ENCODE measurements at regions of chr1 and their contacts with region 1.

Region 1: DNA sequence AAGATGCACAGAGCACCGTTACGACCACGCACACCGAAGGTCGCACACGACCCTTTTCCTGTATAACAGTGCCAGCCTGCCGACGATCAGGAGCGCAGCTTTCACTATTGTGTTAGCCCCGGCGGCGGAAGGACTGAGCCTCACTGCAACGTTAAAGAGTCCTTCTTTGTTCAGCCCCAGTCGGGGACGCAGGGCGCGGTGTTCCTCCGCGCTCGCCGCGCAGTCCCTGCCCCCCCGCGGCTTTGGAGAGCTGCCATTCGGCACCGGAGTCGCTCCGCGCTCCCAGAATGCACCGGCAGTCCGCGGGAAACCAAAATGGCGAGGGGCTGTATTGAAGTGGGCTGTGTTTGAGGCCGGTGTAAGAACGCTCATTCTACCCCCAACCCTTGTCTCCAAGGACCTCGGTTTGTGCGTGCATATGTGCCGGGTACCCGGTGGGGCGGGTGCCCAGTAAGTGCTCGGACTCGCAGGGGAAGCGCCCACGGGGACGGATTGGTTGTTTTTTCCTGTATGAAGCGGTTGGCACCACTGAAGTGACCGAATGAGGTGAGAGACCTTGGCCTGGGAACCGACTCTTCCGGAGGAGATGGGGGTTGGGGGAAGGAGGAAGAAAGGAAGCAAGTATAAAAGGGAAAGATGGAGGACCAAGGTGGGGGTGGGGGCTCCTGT is at the start of gene MTF2:
- DNase-seq: peak; percentile 84 to 92 (median 90)
- ATAC-seq: peak; percentile 96
- H3K4me3 ChIP-seq: peak within 1 kb of the TSS; percentile 88
- H3K4me3 Mint-ChIP-seq: peak within 1 kb of the TSS; percentile 94 to 99 (median 97)
- H3K27ac ChIP-seq: peak within 1 kb of the TSS; percentile 93
- H3K27ac Mint-ChIP-seq: peak within 1 kb of the TSS; percentile 88 to 99 (median 94)
- H3K4me1 ChIP-seq: peaks cover 10 to 22% of the 10 kb centered on the region in 2 donors
- H3K4me1 Mint-ChIP-seq: peaks cover 34 to 58% (median 50%) of the 10 kb centered on the region in 7 donors
- H3K27me3 ChIP-seq: no peaks in the 10 kb centered on the region
- H3K27me3 Mint-ChIP-seq: no peaks in the 10 kb centered on the region
- total RNA-seq, gene MTF2: 35.3 to 63.1 (median 47.1) TPM

Region 2: GRCh38 chr1:92858564-92859399 is 220.3 kb before region 1 on chr1:
- CTCF ChIA-PET with region 1: no interaction called
- POLR2A ChIA-PET with region 1: interaction called, 4 read pairs
- intact Hi-C with region 1: loop called (anchors 1 to 5 kb)
- DNase-seq: peak in 8 of 9 donors; percentile 32 to 86 (median 80)
- ATAC-seq: peak; percentile 100
- H3K4me3 ChIP-seq: peak overlapping the region; percentile 17
- H3K4me3 Mint-ChIP-seq: peak overlapping the region; percentile 5 to 80 (median 70)
- H3K27ac ChIP-seq: peak overlapping the region; percentile 43
- H3K27ac Mint-ChIP-seq: peak overlapping the region; percentile 29 to 83 (median 55)
- H3K4me1 ChIP-seq: peaks cover 0 to 3% of the 10 kb centered on the region in 2 donors
- H3K4me1 Mint-ChIP-seq: peaks cover 15 to 32% (median 22%) of the 10 kb centered on the region in 7 donors
- H3K27me3 ChIP-seq: no peaks in the 10 kb centered on the region
- H3K27me3 Mint-ChIP-seq: no peaks in the 10 kb centered on the region

Region 3: GRCh38 chr1:93042187-93043056 is 36.7 kb before region 1 on chr1:
- CTCF ChIA-PET with region 1: interaction called, 7 read pairs
- POLR2A ChIA-PET with region 1: interaction called, 22 read pairs
- intact Hi-C with region 1: loop called (anchors 1 kb)
- DNase-seq: peak in 8 of 9 donors; percentile 27 to 87 (median 79)
- ATAC-seq: peak; percentile 99
- H3K4me3 ChIP-seq: peak overlapping the region; percentile 38
- H3K4me3 Mint-ChIP-seq: peak overlapping the region; percentile 42 to 89 (median 82)
- H3K27ac ChIP-seq: peak overlapping the region; percentile 78
- H3K27ac Mint-ChIP-seq: peak overlapping the region; percentile 88 to 98 (median 94)
- H3K4me1 ChIP-seq: peaks cover 9 to 10% of the 10 kb centered on the region in 2 donors
- H3K4me1 Mint-ChIP-seq: peaks cover 7 to 38% (median 14%) of the 10 kb centered on the region in 7 donors
- H3K27me3 ChIP-seq: no peaks in the 10 kb centered on the region
- H3K27me3 Mint-ChIP-seq: no peaks in the 10 kb centered on the region

Region 4: GRCh38 chr1:93056214-93056613 is 22.9 kb before region 1 on chr1:
- CTCF ChIA-PET with region 1: no interaction called
- POLR2A ChIA-PET with region 1: no interaction called
- intact Hi-C with region 1: no loop called
- DNase-seq: peak in 3 of 9 donors; percentile 5 to 17 (median 14)
- ATAC-seq: no peak
- H3K4me3 ChIP-seq: no peak overlapping the region
- H3K4me3 Mint-ChIP-seq: no peak overlapping the region
- H3K27ac ChIP-seq: no peak overlapping the region
- H3K27ac Mint-ChIP-seq: no peak overlapping the region
- H3K4me1 ChIP-seq: no peaks in the 10 kb centered on the region
- H3K4me1 Mint-ChIP-seq: peaks cover 0 to 4% (median 0%) of the 10 kb centered on the region in 7 donors
- H3K27me3 ChIP-seq: peaks cover 0 to 5% of the 10 kb centered on the region in 2 donors
- H3K27me3 Mint-ChIP-seq: peaks cover 5 to 39% (median 8%) of the 10 kb centered on the region in 5 donors

Region 5: DNA sequence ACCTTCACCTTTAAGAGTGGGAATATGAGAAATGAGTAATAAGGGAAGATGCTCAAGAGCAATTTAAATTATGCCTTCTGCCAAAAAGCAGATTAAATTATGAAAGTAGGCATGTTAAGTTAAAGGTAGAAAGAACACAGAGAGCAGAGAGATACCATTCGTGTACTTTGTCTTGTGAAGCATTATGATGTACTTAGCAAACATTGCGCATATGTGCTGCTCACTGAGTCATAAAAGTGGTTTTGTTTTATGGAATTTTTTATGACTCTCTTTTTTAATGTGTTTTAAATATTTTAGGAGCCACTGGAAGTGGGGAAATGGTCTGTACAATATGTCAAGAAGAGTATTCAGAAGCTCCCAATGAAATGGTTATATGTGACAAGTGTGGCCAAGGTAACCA is 35.3 kb after region 1 on chr1:
- CTCF ChIA-PET with region 1: no interaction called
- POLR2A ChIA-PET with region 1: interaction called, 6 read pairs
- intact Hi-C with region 1: loop called in 1 of 2 experiments (anchors 5 kb)
- DNase-seq: no peak
- ATAC-seq: no peak
- H3K4me3 ChIP-seq: no peak overlapping the region
- H3K4me3 Mint-ChIP-seq: no peak overlapping the region
- H3K27ac ChIP-seq: no peak overlapping the region
- H3K27ac Mint-ChIP-seq: no peak overlapping the region
- H3K4me1 ChIP-seq: no peaks in the 10 kb centered on the region
- H3K4me1 Mint-ChIP-seq: peaks cover 15 to 36% (median 21%) of the 10 kb centered on the region in 7 donors
- H3K27me3 ChIP-seq: no peaks in the 10 kb centered on the region
- H3K27me3 Mint-ChIP-seq: no peaks in the 10 kb centered on the region

Region 6: DNA sequence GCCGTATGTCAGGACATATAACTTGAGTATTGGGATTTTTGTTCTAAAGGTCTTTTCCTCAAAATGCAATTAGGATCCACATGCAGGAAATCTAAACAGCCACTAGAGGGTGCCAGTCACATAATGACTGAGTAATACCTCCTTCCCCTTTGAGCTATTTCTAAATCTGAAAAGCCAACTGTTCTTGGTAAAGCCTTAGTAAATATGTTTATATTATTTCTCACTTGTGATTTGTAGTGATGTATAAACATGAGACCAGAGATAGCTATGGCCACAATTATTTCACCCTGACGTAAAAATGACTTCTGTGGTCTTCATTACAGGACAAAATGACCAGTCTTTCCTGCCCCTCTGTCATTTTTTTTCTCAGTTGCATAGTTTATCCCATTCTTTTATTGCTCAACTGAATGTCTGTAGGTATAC is 225.6 kb after region 1 on chr1:
- CTCF ChIA-PET with region 1: interaction called, 6 read pairs
- POLR2A ChIA-PET with region 1: interaction called, 3 read pairs
- intact Hi-C with region 1: loop called (anchors 1 to 2 kb)
- DNase-seq: peak in 8 of 9 donors; percentile 24 to 72 (median 54)
- ATAC-seq: peak; percentile 78
- H3K4me3 ChIP-seq: no peak overlapping the region
- H3K4me3 Mint-ChIP-seq: no peak overlapping the region
- H3K27ac ChIP-seq: no peak overlapping the region
- H3K27ac Mint-ChIP-seq: no peak overlapping the region
- H3K4me1 ChIP-seq: no peaks in the 10 kb centered on the region
- H3K4me1 Mint-ChIP-seq: peaks cover 0 to 4% (median 0%) of the 10 kb centered on the region in 7 donors
- H3K27me3 ChIP-seq: no peaks in the 10 kb centered on the region
- H3K27me3 Mint-ChIP-seq: no peaks in the 10 kb centered on the region

Region 7: DNA sequence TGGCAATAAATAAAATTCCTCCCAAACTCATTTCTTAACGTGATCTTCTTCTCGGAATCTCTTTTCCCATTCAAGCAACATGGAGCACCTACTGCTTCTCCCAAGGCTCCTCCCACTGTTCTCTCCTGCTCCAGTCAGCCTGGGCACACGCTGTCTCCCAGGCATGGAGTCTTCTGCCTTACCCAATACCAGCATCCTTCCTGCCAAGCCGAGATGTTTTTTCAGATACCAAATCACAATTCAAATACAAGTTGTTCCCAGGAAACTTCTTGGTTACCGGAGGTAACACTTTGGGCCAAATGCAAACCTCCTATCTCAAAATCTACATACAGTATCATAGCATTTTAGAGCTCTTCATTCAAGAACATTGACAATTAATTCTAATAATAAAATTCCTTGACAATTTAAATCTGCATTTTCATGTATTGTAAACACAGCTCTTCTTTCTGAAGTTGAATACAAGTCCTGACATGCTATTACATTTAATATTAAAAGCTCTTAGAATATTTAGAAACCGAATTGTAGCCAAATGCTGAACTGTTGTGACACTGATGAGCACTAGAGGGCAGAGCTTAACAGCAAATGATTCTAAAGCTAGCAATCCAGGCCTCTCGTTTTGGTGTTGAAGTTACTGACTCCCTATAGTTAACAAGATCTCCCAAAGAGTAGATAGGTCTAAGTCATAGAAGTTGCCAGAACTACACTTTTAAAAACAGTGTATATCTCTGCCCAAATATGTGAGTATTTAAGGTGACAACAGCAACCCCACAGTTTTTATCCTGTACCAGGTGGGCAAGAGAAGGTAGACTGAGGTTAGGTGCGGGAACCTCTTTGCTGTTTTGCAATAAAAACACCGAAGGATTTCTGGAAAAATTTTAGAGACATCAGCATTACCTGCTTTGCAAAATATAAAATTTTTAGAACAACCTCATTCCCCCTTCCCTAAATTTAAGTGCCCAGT is 550.3 kb after region 1 on chr1:
- CTCF ChIA-PET with region 1: interaction called, 4 read pairs
- POLR2A ChIA-PET with region 1: no interaction called
- intact Hi-C with region 1: loop called in 1 of 2 experiments (anchors 2 kb)
- DNase-seq: peak in 8 of 9 donors; percentile 22 to 69 (median 56)
- ATAC-seq: peak; percentile 89
- H3K4me3 ChIP-seq: no peak overlapping the region
- H3K4me3 Mint-ChIP-seq: no peak overlapping the region
- H3K27ac ChIP-seq: no peak overlapping the region
- H3K27ac Mint-ChIP-seq: no peak overlapping the region
- H3K4me1 ChIP-seq: no peaks in the 10 kb centered on the region
- H3K4me1 Mint-ChIP-seq: no peaks in the 10 kb centered on the region
- H3K27me3 ChIP-seq: no peaks in the 10 kb centered on the region
- H3K27me3 Mint-ChIP-seq: peaks cover 0 to 10% (median 0%) of the 10 kb centered on the region in 5 donors

Region 8: DNA sequence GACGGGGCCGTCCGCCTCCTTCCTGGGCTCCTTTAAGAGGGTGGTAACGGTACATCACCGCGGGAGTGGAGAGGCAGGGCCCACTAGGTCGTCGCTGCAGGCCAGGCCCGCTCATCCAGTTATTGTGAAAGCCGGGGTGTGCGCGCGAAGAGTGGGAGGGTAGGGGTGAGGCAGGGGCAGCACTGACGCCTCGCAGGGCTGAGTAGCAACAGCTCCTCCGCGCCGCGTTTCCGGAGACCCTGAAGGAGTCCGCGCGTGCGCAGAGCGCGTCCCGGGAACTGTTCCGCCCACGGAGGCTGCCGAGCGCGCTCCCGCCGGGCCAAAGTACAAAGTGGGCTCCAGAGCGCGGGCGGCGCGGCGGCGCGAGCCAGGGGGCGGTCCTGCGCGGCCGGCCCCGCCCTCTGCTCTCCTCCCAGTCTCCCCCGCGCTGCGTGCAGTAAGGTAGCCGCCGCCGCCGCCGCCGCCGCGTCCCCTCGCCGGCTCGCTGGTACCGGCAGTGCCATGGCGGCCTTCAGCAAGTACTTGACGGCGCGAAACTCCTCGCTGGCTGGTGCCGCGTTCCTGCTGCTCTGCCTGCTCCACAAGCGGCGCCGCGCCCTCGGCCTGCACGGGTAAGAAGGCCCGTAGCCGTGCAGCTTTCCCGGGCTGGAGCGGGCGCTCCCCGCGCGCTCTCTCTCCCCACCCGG is 1339.0 kb after region 1 on chr1 and contains the start of gene ABCD3:
- CTCF ChIA-PET with region 1: no interaction called
- POLR2A ChIA-PET with region 1: no interaction called
- intact Hi-C with region 1: loop called in 1 of 2 experiments (anchors 5 kb)
- DNase-seq: peak; percentile 97 to 99 (median 99)
- ATAC-seq: peak; percentile 97
- H3K4me3 ChIP-seq: peak within 1 kb of the TSS; percentile 79
- H3K4me3 Mint-ChIP-seq: no peak within 1 kb of the TSS
- H3K27ac ChIP-seq: peak within 1 kb of the TSS; percentile 76
- H3K27ac Mint-ChIP-seq: peak within 1 kb of the TSS in 7 of 9 donors; percentile 68 to 91 (median 83)
- H3K4me1 ChIP-seq: peaks cover 10 to 15% of the 10 kb centered on the region in 2 donors
- H3K4me1 Mint-ChIP-seq: peaks cover 25 to 42% (median 40%) of the 10 kb centered on the region in 7 donors
- H3K27me3 ChIP-seq: no peaks in the 10 kb centered on the region
- H3K27me3 Mint-ChIP-seq: peaks cover 0 to 16% (median 0%) of the 10 kb centered on the region in 5 donors
- total RNA-seq, gene ABCD3: 18.0 to 31.2 (median 25.0) TPM